ENCODE measurements at regions of chr1 and their contacts with region 1.

Region 1: GRCh38 chr1:199009447-199009846 is 370.6 kb downstream of the PTPRC start:
- DNase-seq: peak; percentile 8
- H3K4me3 Mint-ChIP-seq: peak overlapping the region; percentile 75
- H3K27ac Mint-ChIP-seq: peak overlapping the region; percentile 76
- H3K4me1 Mint-ChIP-seq: peaks cover 50% of the 10 kb centered on the region
- H3K27me3 Mint-ChIP-seq: no peaks in the 10 kb centered on the region

Region 2: GRCh38 chr1:198771563-198772153 is 237.8 kb before region 1 on chr1:
- intact Hi-C with region 1: no loop called
- DNase-seq: no peak
- H3K4me3 Mint-ChIP-seq: no peak overlapping the region
- H3K27ac Mint-ChIP-seq: no peak overlapping the region
- H3K4me1 Mint-ChIP-seq: peaks cover 11% of the 10 kb centered on the region
- H3K27me3 Mint-ChIP-seq: peaks cover 5% of the 10 kb centered on the region

Region 3: DNA sequence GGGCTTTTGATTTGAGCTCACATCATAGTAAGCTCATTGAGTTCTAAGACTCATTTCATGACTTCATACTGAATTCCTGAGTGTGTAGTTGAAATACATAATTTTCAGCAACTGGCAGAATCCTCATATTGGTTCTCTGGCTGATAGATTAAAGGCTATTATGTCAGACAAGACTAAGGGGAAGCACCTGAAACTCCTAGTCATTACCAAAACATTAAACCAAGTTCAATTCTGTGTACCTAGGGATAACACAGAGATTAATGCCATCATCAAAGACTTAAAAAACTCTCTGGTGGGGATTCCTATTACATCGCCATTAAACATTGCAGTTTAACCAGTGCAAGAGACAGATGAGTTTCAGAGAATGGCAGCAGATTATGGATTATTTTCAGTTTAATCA is 31.5 kb before region 1 on chr1:
- intact Hi-C with region 1: no loop called
- DNase-seq: no peak
- H3K4me3 Mint-ChIP-seq: no peak overlapping the region
- H3K27ac Mint-ChIP-seq: no peak overlapping the region
- H3K4me1 Mint-ChIP-seq: peaks cover 29% of the 10 kb centered on the region
- H3K27me3 Mint-ChIP-seq: peaks cover 2% of the 10 kb centered on the region

Region 4: GRCh38 chr1:199029855-199030254 is 20.4 kb after region 1 on chr1:
- intact Hi-C with region 1: loop called (anchors 1 kb)
- DNase-seq: no peak
- H3K4me3 Mint-ChIP-seq: peak overlapping the region; percentile 2
- H3K27ac Mint-ChIP-seq: peak overlapping the region; percentile 45
- H3K4me1 Mint-ChIP-seq: peaks cover 57% of the 10 kb centered on the region
- H3K27me3 Mint-ChIP-seq: no peaks in the 10 kb centered on the region

Region 5: DNA sequence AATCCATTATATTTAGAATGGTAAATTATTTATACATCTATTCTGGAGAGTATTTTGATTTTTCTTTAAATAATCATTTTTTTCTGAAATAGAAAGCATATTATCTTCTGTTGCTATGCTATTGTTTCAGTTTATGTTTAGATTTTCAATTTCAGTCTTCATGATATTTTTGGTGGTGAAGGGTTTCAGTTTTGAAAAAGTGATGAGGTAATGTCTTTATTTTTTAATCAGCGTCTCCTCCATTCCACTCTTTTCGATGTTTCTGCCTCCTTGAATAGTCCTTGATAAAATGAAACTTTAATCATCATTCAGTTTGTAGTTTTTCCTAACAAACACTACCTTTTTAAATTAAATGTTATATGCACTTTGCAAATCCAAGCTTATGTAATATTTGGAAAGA is 58.0 kb after region 1 on chr1:
- intact Hi-C with region 1: no loop called
- DNase-seq: no peak
- H3K4me3 Mint-ChIP-seq: peak overlapping the region; percentile 38
- H3K27ac Mint-ChIP-seq: peak overlapping the region; percentile 21
- H3K4me1 Mint-ChIP-seq: peaks cover 50% of the 10 kb centered on the region
- H3K27me3 Mint-ChIP-seq: no peaks in the 10 kb centered on the region

Region 6: DNA sequence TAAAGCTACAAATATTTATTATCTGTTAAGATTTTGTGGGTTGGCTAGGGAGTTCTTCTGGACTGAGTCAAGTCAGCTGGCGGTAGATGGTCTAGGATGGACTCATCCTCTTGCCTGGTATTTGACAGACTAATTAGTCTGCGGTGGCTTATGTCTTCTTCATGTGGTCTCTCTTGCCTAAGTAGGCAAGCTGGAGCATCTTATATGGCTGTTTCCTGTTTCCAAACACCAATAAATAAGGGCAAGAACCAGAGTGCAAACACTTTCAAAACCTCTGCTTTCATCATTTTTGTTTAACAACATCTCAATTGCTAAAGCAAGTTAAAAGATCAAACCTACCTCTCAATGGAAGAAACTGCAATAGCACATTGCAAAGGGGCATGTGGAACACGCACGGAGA is 114.2 kb after region 1 on chr1:
- intact Hi-C with region 1: no loop called
- DNase-seq: no peak
- H3K4me3 Mint-ChIP-seq: no peak overlapping the region
- H3K27ac Mint-ChIP-seq: no peak overlapping the region
- H3K4me1 Mint-ChIP-seq: peaks cover 18% of the 10 kb centered on the region
- H3K27me3 Mint-ChIP-seq: peaks cover 7% of the 10 kb centered on the region